GM12878 (cell line): ENCODE measurements at regions of chr6 and their contacts with region 1.

Region 1: DNA sequence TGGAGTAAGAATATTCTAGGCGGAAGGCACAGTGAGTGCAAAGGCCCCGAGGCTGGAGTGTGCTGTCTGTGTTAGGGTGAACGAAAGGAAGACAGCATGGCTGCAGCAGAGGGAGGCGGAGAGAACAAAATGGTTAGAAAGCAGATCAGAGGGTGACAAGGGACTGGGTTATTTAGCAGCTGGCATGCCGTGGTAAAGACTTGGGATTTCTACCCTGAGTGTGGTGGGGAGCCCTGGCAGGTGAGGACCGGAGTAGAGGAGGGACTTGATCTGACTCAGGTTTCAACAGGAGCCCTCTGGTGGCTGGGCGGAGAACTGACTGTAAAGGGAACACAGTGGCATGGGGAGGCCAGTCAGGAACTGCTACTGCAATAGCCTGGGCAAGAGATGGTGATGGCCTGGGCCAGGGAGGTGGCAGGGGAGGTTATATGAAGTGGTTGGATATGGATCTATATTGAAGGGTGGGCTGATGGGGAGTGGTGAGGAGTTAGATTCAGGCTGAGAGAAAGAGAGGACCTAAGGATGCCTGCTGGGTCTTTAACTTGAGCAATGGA is 38.0 kb downstream of the PIM1 start:
- DNase-seq: peak; percentile 28
- ATAC-seq: peak; percentile 96
- H3K4me3 ChIP-seq: no peak overlapping the region
- H3K27ac ChIP-seq: no peak overlapping the region
- H3K4me1 ChIP-seq: peaks cover 3% of the 10 kb centered on the region; the same call in 1 of the 2 replicates
- H3K27me3 ChIP-seq: no peaks in the 10 kb centered on the region
- CTCF ChIP-seq: peak; percentile 87 to 93 (median 87)
- EP300 ChIP-seq: no peak
- POLR2A ChIP-seq: no peak
- RAD21 ChIP-seq: peak; percentile 63

Region 2: GRCh38 chr6:36885461-36886401 is 322.2 kb before region 1 on chr6 and contains the start of gene C6orf89:
- CTCF ChIA-PET with region 1: interaction called, 17 read pairs
- POLR2A ChIA-PET with region 1: no interaction called
- RAD21 ChIA-PET with region 1: interaction called, 3 read pairs
- SMC1A ChIA-PET with region 1: interaction called, 4 read pairs
- in situ Hi-C with region 1: loop called (anchors 5 kb)
- intact Hi-C with region 1: loop called (anchors 1 kb)
- DNase-seq: peak; percentile 92
- ATAC-seq: peak; percentile 98
- H3K4me3 ChIP-seq: peak within 1 kb of the TSS; percentile 99
- H3K27ac ChIP-seq: peak within 1 kb of the TSS; percentile 77
- H3K4me1 ChIP-seq: no peaks in the 10 kb centered on the region
- H3K27me3 ChIP-seq: no peaks in the 10 kb centered on the region
- CTCF ChIP-seq: peak; percentile 72 to 83 (median 79)
- EP300 ChIP-seq: no peak
- POLR2A ChIP-seq: peak; percentile 88
- RAD21 ChIP-seq: peak; percentile 24; the same call in 1 of the 2 replicates
- polyA plus RNA-seq, gene C6orf89: 10.8 to 11.4 TPM

Region 3: GRCh38 chr6:37029249-37029971 is 178.6 kb before region 1 on chr6:
- CTCF ChIA-PET with region 1: interaction called, 60 read pairs
- POLR2A ChIA-PET with region 1: no interaction called
- RAD21 ChIA-PET with region 1: interaction called, 31 read pairs
- SMC1A ChIA-PET with region 1: interaction called, 20 read pairs
- in situ Hi-C with region 1: loop called (anchors 10 kb)
- intact Hi-C with region 1: loop called (anchors 1 kb)
- DNase-seq: no peak
- ATAC-seq: peak; percentile 90
- H3K4me3 ChIP-seq: no peak overlapping the region
- H3K27ac ChIP-seq: no peak overlapping the region
- H3K4me1 ChIP-seq: no peaks in the 10 kb centered on the region
- H3K27me3 ChIP-seq: no peaks in the 10 kb centered on the region
- CTCF ChIP-seq: peak; percentile 68 to 75 (median 72)
- EP300 ChIP-seq: no peak
- POLR2A ChIP-seq: no peak
- RAD21 ChIP-seq: peak; percentile 88

Region 4: DNA sequence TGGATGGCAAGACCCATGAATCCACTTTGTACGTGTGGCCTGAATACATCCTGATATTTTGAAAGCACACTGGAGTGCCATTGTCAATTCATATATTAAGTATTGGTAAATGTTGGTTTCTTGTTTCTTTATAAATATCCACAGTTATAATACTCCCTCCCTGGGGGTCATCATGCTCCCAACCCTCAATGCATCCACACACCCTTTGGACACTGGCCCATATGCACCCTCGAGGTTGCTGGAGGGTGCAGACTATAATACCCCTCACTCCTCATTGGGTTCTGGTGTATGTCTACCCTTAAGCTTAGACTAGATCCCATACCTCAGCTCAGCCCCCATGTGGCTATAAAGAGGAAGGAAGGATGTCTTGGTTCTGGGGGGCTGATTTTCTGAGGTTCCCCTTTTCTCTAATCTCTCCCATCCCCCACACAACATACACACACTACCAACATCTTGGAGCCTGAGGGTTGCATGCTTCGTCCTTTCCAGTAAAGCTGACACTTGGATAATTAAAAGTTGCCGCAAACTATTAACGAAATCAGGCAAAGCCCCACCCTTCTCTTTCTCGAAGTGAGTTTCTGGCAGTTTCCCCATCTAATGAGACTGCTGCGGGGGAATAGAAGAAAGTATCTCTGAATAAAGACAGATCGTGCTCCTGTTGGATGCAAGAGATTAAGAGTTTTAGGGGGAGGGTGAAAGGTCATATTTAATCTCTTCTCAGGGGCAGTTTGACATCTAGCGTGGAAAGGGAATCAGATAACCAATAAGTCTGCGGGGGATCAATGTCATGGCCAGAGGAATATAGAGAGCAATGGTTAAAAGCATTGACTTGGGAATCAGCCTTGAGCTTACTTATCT is 30.7 kb before region 1 on chr6:
- CTCF ChIA-PET with region 1: interaction called, 75 read pairs
- POLR2A ChIA-PET with region 1: no interaction called
- RAD21 ChIA-PET with region 1: interaction called, 34 read pairs
- SMC1A ChIA-PET with region 1: interaction called, 18 read pairs
- in situ Hi-C with region 1: no loop called
- intact Hi-C with region 1: loop called (anchors 1 kb)
- DNase-seq: no peak
- ATAC-seq: no peak
- H3K4me3 ChIP-seq: no peak overlapping the region
- H3K27ac ChIP-seq: no peak overlapping the region
- H3K4me1 ChIP-seq: peaks cover 26% of the 10 kb centered on the region
- H3K27me3 ChIP-seq: no peaks in the 10 kb centered on the region
- CTCF ChIP-seq: no peak
- EP300 ChIP-seq: no peak
- POLR2A ChIP-seq: no peak
- RAD21 ChIP-seq: no peak

Region 5: GRCh38 chr6:37190159-37190535 is 17.8 kb before region 1 on chr6:
- CTCF ChIA-PET with region 1: interaction called, 22 read pairs
- POLR2A ChIA-PET with region 1: interaction called, 6 read pairs
- RAD21 ChIA-PET with region 1: interaction called, 11 read pairs
- SMC1A ChIA-PET with region 1: interaction called, 3 read pairs
- in situ Hi-C with region 1: no loop called
- intact Hi-C with region 1: no loop called
- DNase-seq: no peak
- ATAC-seq: no peak
- H3K4me3 ChIP-seq: no peak overlapping the region
- H3K27ac ChIP-seq: no peak overlapping the region
- H3K4me1 ChIP-seq: no peaks in the 10 kb centered on the region; the same call in 1 of the 2 replicates
- H3K27me3 ChIP-seq: no peaks in the 10 kb centered on the region
- CTCF ChIP-seq: no peak
- EP300 ChIP-seq: no peak
- POLR2A ChIP-seq: no peak
- RAD21 ChIP-seq: no peak

Region 6: DNA sequence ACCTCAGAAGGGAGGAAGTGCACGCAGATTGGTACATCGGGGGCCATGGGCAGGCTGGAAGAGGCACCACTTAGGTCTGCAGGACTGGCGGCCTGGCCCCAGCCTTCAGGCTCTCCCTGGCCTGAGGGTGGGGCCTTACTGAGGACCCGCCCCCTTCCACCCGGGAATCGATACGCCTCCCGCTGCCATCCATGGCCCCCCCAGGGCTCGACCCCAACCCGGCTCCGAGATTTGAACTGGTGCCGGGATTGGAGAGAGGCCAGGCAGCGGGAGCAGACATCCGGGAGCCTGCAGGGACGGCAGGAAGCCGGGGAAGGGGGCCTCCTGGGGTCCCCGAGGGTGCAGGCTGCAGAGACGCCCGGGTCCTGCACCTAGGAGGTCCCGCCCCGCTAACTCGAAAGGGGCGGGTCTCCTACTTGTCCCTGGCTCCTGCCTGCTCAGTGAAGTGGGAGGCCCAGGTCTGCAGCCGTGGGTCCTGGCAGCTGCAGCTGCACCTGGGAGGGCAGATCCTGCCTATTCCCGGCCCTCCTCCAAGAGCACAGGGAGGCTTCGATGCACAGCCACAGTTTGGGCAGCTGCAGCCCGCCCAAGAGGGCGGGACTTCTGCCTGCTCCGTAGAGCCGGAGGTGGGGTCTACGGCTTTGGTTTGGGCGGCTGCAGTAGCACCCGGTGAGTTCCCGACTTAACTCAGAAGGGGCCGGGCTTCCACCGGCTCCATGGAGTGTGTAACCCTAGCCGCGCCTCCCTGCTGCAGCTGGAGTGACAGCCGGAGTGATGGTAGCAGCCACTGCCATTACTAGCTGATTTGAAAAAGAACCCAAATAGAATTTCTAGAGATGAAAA is 14.4 kb after region 1 on chr6:
- CTCF ChIA-PET with region 1: interaction called, 36 read pairs
- POLR2A ChIA-PET with region 1: no interaction called
- RAD21 ChIA-PET with region 1: no interaction called
- SMC1A ChIA-PET with region 1: interaction called, 5 read pairs
- in situ Hi-C with region 1: no loop called
- intact Hi-C with region 1: no loop called
- DNase-seq: peak; percentile 45
- ATAC-seq: peak; percentile 98
- H3K4me3 ChIP-seq: peak overlapping the region; percentile 71
- H3K27ac ChIP-seq: no peak overlapping the region
- H3K4me1 ChIP-seq: peaks cover 11% of the 10 kb centered on the region
- H3K27me3 ChIP-seq: no peaks in the 10 kb centered on the region
- CTCF ChIP-seq: no peak
- EP300 ChIP-seq: no peak
- POLR2A ChIP-seq: no peak; the same call in 1 of the 2 replicates
- RAD21 ChIP-seq: no peak

Region 7: GRCh38 chr6:37314487-37315156 is 106.6 kb after region 1 on chr6:
- CTCF ChIA-PET with region 1: interaction called, 30 read pairs
- POLR2A ChIA-PET with region 1: no interaction called
- RAD21 ChIA-PET with region 1: interaction called, 9 read pairs
- SMC1A ChIA-PET with region 1: interaction called, 7 read pairs
- in situ Hi-C with region 1: no loop called
- intact Hi-C with region 1: no loop called
- DNase-seq: no peak
- ATAC-seq: peak; percentile 89
- H3K4me3 ChIP-seq: no peak overlapping the region
- H3K27ac ChIP-seq: no peak overlapping the region
- H3K4me1 ChIP-seq: peaks cover 19% of the 10 kb centered on the region
- H3K27me3 ChIP-seq: no peaks in the 10 kb centered on the region
- CTCF ChIP-seq: peak; percentile 63 to 74 (median 73)
- EP300 ChIP-seq: no peak
- POLR2A ChIP-seq: no peak
- RAD21 ChIP-seq: peak; percentile 73

Region 8: GRCh38 chr6:37705239-37706051 is 497.5 kb after region 1 on chr6:
- CTCF ChIA-PET with region 1: no interaction called
- POLR2A ChIA-PET with region 1: no interaction called
- RAD21 ChIA-PET with region 1: no interaction called
- SMC1A ChIA-PET with region 1: no interaction called
- in situ Hi-C with region 1: no loop called
- intact Hi-C with region 1: no loop called
- DNase-seq: peak; percentile 30
- ATAC-seq: peak; percentile 94
- H3K4me3 ChIP-seq: peak overlapping the region; percentile 38
- H3K27ac ChIP-seq: no peak overlapping the region; the same call in 1 of the 2 replicates
- H3K4me1 ChIP-seq: peaks cover 5% of the 10 kb centered on the region
- H3K27me3 ChIP-seq: peaks cover 0 to 3% of the 10 kb centered on the region in 2 experiments; a peak in 1 of 4 replicates
- CTCF ChIP-seq: peak; percentile 73 to 77 (median 75)
- EP300 ChIP-seq: no peak
- POLR2A ChIP-seq: peak; percentile 40
- RAD21 ChIP-seq: peak; percentile 64